BJ (cell line): ENCODE measurements at regions of chr5 and their contacts with region 1.

Region 1: GRCh38 chr5:53557386-53557785 is 3.1 kb upstream of the NDUFS4 start:
- DNase-seq: no peak
- H3K4me3 ChIP-seq: no peak overlapping the region
- H3K27me3 ChIP-seq: no peaks in the 10 kb centered on the region; the same call in 1 of the 2 replicates
- CTCF ChIP-seq: no peak

Region 2: DNA sequence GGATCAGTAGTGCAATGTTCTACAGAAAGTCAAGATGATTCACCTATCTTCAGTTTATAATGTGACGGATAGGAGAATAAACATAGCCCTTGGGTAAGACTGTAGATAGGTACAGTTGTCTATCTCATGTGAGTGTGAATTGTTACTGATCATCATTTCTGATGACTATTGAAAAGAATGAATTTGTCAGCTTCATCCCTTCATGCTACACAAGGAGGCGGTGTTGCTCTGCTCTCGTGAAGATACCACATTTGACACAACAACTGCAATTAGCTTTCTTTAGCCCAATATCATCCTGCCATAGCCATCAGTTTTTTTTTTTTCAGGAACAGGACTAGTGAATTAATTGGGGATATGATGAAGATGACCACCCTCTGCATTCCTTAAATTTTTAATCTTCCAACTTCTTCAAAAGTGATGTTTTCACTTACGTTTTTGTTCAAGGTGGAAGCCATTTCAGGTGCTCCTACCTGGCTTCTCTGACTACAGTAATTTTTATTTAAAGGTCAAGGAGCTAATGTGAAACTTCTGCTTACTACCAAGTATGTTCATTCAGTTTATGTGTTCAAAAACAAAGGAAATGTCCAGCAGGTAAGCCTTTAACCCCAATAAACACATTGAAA is 294.9 kb before region 1 on chr5:
- CTCF ChIA-PET with region 1: no interaction called
- POLR2A ChIA-PET with region 1: interaction called, 18 read pairs
- DNase-seq: no peak
- H3K4me3 ChIP-seq: no peak overlapping the region
- H3K27me3 ChIP-seq: no peaks in the 10 kb centered on the region
- CTCF ChIP-seq: peak; percentile 69

Region 3: GRCh38 chr5:53425598-53426511 is 131.5 kb before region 1 on chr5:
- CTCF ChIA-PET with region 1: no interaction called
- POLR2A ChIA-PET with region 1: no interaction called
- DNase-seq: no peak
- H3K4me3 ChIP-seq: no peak overlapping the region
- H3K27me3 ChIP-seq: no peaks in the 10 kb centered on the region
- CTCF ChIP-seq: peak; percentile 25